Activated CD4-positive, alpha-beta memory T cell treated with anti-CD3 and anti-CD28 coated beads, Interleukin-2, amount 10 ng/mL, durations not matched to agents 7 days and 5 days (primary cell): ENCODE measurements at regions of chr18 and their contacts with region 1.

Region 1: GRCh38 chr18:58768293-58768974 is 96.2 kb upstream of the ZNF532 start:
- DNase-seq: peak; percentile 66
- H3K4me3 Mint-ChIP-seq: no peak overlapping the region
- H3K27ac Mint-ChIP-seq: no peak overlapping the region
- H3K4me1 Mint-ChIP-seq: peaks cover 13% of the 10 kb centered on the region
- H3K27me3 Mint-ChIP-seq: peaks cover 36% of the 10 kb centered on the region

Region 2: GRCh38 chr18:58520969-58521368 is 247.5 kb before region 1 on chr18:
- CTCF ChIA-PET with region 1: interaction called, 17 read pairs
- POLR2A ChIA-PET with region 1: no interaction called
- DNase-seq: no peak
- H3K4me3 Mint-ChIP-seq: no peak overlapping the region
- H3K27ac Mint-ChIP-seq: no peak overlapping the region
- H3K4me1 Mint-ChIP-seq: peaks cover 6% of the 10 kb centered on the region
- H3K27me3 Mint-ChIP-seq: peaks cover 8% of the 10 kb centered on the region

Region 3: GRCh38 chr18:58529714-58530354 is 238.6 kb before region 1 on chr18:
- CTCF ChIA-PET with region 1: interaction called, 216 read pairs
- POLR2A ChIA-PET with region 1: interaction called, 3 read pairs
- DNase-seq: peak; percentile 63
- H3K4me3 Mint-ChIP-seq: no peak overlapping the region
- H3K27ac Mint-ChIP-seq: no peak overlapping the region
- H3K4me1 Mint-ChIP-seq: peaks cover 4% of the 10 kb centered on the region
- H3K27me3 Mint-ChIP-seq: peaks cover 26% of the 10 kb centered on the region

Region 4: GRCh38 chr18:58541789-58542425 is 226.5 kb before region 1 on chr18:
- CTCF ChIA-PET with region 1: interaction called, 32 read pairs
- POLR2A ChIA-PET with region 1: no interaction called
- DNase-seq: peak; percentile 61
- H3K4me3 Mint-ChIP-seq: no peak overlapping the region
- H3K27ac Mint-ChIP-seq: peak overlapping the region; percentile 12
- H3K4me1 Mint-ChIP-seq: peaks cover 49% of the 10 kb centered on the region
- H3K27me3 Mint-ChIP-seq: peaks cover 42% of the 10 kb centered on the region

Region 5: GRCh38 chr18:58661423-58661822 is 107.0 kb before region 1 on chr18:
- CTCF ChIA-PET with region 1: interaction called, 17 read pairs
- POLR2A ChIA-PET with region 1: no interaction called
- DNase-seq: no peak
- H3K4me3 Mint-ChIP-seq: no peak overlapping the region
- H3K27ac Mint-ChIP-seq: no peak overlapping the region
- H3K4me1 Mint-ChIP-seq: peaks cover 43% of the 10 kb centered on the region
- H3K27me3 Mint-ChIP-seq: peaks cover 3% of the 10 kb centered on the region

Region 6: DNA sequence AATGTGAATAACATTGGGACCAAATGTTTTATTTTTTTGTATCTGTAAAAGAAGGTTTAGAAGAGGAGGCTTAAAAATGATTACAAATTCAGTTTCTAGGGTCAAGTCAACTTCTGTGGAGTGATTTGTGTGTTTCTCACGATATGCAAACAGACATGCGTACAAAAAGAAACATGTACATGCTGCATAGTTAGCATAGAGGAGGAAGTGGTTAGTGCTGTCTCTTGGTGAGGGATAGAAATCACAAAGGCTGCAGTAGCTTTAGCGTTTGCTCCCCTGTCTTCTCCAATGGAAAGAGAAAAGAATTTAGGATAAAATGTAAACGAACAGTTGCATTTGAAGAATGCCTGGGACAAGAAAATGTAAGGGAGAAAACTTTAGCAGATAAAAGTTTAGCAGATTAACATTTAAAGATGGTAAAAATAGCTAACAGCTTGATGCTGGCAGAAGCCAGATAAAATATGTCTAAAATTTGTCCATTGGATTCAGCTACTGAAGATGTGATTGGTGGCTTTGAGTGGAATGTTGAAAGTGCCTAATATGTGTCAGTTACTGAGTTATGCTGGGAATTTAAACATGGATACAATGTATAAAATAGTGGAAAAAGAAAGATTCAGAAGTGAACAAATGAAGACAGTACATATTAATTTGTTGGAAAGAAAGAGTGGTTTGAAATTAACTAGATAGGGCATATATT is 52.2 kb before region 1 on chr18:
- CTCF ChIA-PET with region 1: no interaction called
- POLR2A ChIA-PET with region 1: no interaction called
- DNase-seq: no peak
- H3K4me3 Mint-ChIP-seq: peak overlapping the region; percentile 15
- H3K27ac Mint-ChIP-seq: peak overlapping the region; percentile 56
- H3K4me1 Mint-ChIP-seq: peaks cover 32% of the 10 kb centered on the region
- H3K27me3 Mint-ChIP-seq: no peaks in the 10 kb centered on the region

Region 7: DNA sequence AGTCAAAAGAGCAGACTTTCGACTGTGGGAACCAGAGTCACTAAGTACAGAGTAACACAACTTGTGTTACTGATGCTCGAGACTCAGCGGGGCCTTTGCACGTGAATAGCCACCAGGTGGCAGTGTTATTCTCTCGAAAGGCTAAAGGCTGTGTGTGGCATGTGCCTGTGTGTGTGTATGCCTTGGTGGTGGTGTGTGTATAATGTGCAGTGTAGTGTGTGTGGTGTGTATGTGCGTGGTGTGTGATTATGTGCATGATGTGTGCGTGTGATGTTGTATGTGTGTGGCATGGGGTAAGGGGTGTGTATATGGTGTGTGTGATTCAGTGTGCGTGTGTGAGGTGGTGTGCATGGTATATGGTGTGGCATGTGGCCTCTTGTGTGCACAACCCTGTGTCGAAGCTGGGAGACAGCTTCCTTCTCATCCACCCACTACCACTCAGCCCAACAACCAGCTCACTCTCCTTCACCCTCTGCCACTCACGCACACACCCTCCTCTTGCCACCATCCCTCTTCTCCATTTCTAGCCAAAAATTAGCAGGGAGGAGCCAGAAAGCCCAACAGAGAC is 13.3 kb after region 1 on chr18:
- CTCF ChIA-PET with region 1: interaction called, 17 read pairs
- POLR2A ChIA-PET with region 1: no interaction called
- DNase-seq: peak; percentile 71
- H3K4me3 Mint-ChIP-seq: no peak overlapping the region
- H3K27ac Mint-ChIP-seq: no peak overlapping the region
- H3K4me1 Mint-ChIP-seq: peaks cover 7% of the 10 kb centered on the region
- H3K27me3 Mint-ChIP-seq: peaks cover 5% of the 10 kb centered on the region

Region 8: DNA sequence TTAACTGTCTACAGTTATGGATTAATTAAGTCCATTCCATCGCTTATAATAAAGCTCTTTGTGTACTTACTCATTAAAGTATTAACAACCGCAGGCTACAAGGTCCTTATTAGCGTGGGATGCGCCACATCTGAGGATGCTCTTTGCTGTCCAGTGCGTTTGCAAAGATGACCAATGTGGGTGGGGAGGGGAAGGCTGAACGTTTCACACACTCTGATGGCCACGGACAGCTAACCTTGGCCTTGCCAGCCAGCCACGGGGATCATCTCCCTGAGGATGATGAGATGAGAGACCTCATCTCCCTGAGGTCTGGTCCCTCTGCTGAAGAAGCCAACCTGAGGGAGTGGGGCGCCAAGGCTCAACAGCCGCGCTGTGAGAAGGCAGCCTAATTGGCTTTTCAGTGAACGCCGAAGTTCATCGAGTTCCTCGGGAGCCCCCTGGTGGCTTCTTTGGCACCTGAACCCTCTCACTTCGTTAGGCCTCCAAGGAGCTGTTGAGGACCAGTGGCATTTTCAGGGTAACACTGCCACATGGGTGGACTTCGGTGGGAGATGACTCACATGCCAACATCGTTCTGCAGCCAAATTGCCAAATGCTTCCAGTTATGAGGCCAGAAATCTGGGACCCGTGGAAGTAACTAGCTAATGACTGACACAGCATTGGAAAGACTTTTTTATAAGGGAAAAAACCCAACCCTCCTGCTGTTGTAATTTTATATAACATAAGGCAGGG is 301.9 kb after region 1 on chr18:
- CTCF ChIA-PET with region 1: interaction called, 63 read pairs
- POLR2A ChIA-PET with region 1: no interaction called
- DNase-seq: peak; percentile 76
- H3K4me3 Mint-ChIP-seq: no peak overlapping the region
- H3K27ac Mint-ChIP-seq: no peak overlapping the region
- H3K4me1 Mint-ChIP-seq: no peaks in the 10 kb centered on the region
- H3K27me3 Mint-ChIP-seq: no peaks in the 10 kb centered on the region